ENCODE measurements at regions of chr19 and their contacts with region 1.

Region 1: GRCh38 chr19:734716-735115 is 16.2 kb upstream of the MISP start:
- DNase-seq: no peak
- ATAC-seq: no peak
- H3K4me3 ChIP-seq: no peak overlapping the region
- H3K4me3 Mint-ChIP-seq: no peak overlapping the region
- H3K27ac ChIP-seq: no peak overlapping the region
- H3K27ac Mint-ChIP-seq: no peak overlapping the region
- H3K4me1 ChIP-seq: peaks cover 26% of the 10 kb centered on the region
- H3K4me1 Mint-ChIP-seq: peaks cover 0 to 26% of the 10 kb centered on the region in 2 donors
- H3K27me3 ChIP-seq: no peaks in the 10 kb centered on the region
- H3K27me3 Mint-ChIP-seq: no peaks in the 10 kb centered on the region
- CTCF ChIP-seq: no peak

Region 2: DNA sequence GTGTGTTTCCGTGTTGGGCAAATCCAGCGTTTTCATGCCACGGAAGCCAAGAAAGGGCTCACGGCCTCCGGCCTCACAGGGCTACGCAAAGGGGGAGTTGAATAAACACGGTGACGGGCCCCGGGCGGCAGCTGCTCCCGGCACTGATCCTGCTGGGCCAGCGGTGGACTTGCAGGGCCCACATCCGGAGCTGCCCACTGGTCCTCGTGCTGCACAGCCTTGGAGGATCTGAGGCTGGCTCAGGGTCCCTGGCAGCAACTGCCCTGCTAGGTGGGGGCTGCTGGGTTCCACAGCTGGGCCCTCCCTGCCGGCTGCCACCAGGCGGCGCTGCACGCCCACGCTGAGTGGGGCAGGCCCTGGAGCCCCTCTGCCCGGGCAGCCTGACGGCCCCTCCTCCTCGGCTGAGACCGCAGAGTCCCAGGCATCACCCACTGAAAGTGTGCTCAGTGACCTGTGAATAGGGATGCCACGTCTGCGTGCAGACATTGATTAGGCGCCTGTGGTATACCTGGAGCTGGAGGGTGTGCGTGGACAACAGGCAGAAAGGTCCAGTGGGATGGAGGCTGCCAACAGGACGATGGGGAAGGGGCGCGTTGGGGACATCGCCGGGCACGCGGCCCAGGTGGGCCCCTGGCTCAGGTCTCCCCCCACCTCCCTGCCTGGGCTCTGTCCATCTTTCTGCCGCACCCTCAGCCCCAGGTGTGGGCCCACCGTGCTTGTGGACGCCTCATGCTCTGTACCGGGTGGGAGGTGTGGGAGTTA is 150.3 kb before region 1 on chr19:
- intact Hi-C with region 1: loop called (anchors 1 kb)
- DNase-seq: peak; percentile 68 to 83
- ATAC-seq: peak; percentile 71 to 78 (median 77)
- H3K4me3 ChIP-seq: no peak overlapping the region
- H3K4me3 Mint-ChIP-seq: no peak overlapping the region
- H3K27ac ChIP-seq: no peak overlapping the region
- H3K27ac Mint-ChIP-seq: no peak overlapping the region
- H3K4me1 ChIP-seq: peaks cover 29% of the 10 kb centered on the region
- H3K4me1 Mint-ChIP-seq: peaks cover 5 to 6% of the 10 kb centered on the region in 2 donors
- H3K27me3 ChIP-seq: peaks cover 12% of the 10 kb centered on the region
- H3K27me3 Mint-ChIP-seq: no peaks in the 10 kb centered on the region
- CTCF ChIP-seq: peak; percentile 84

Measured in natural killer cell (primary cell).